ENCODE measurements at regions of chr20 and their contacts with region 1.

Region 1: GRCh38 chr20:13638496-13639222 is at the start of gene TASP1:
- DNase-seq: peak; percentile 93 to 99 (median 97)
- ATAC-seq: peak; percentile 99 to 100 (median 100)
- H3K4me3 ChIP-seq: peak within 1 kb of the TSS; percentile 79 to 96
- H3K4me3 Mint-ChIP-seq: peak within 1 kb of the TSS; percentile 85 to 89 (median 88)
- H3K27ac ChIP-seq: peak within 1 kb of the TSS; percentile 62
- H3K27ac Mint-ChIP-seq: peak within 1 kb of the TSS; percentile 65 to 77
- H3K4me1 ChIP-seq: peaks cover 2 to 9% of the 10 kb centered on the region in 2 experiments
- H3K4me1 Mint-ChIP-seq: peaks cover 18 to 26% (median 22%) of the 10 kb centered on the region in 3 donors
- H3K27me3 ChIP-seq: peaks cover 0 to 2% of the 10 kb centered on the region in 2 experiments
- H3K27me3 Mint-ChIP-seq: peaks cover 3 to 7% of the 10 kb centered on the region in 2 donors
- total RNA-seq, gene TASP1: 11.2 to 19.4 (median 13.8) TPM

Region 2: GRCh38 chr20:12305188-12305962 is 1333.3 kb before region 1 on chr20:
- CTCF ChIA-PET with region 1: no interaction called
- POLR2A ChIA-PET with region 1: interaction called in 1 of 2 experiments, 12 read pairs
- DNase-seq: no peak
- ATAC-seq: no peak
- H3K4me3 ChIP-seq: no peak overlapping the region
- H3K4me3 Mint-ChIP-seq: no peak overlapping the region
- H3K27ac ChIP-seq: no peak overlapping the region
- H3K27ac Mint-ChIP-seq: no peak overlapping the region
- H3K4me1 ChIP-seq: no peaks in the 10 kb centered on the region
- H3K4me1 Mint-ChIP-seq: no peaks in the 10 kb centered on the region
- H3K27me3 ChIP-seq: no peaks in the 10 kb centered on the region
- H3K27me3 Mint-ChIP-seq: no peaks in the 10 kb centered on the region

Measured in T-cell (primary cell).